Endothelial cell of umbilical vein (primary cell): ENCODE measurements at regions of chr4 and their contacts with region 1.

Region 1: GRCh38 chr4:103786014-103786413 is 66.2 kb upstream of the TACR3 start:
- DNase-seq: peak; percentile 40
- H3K4me3 ChIP-seq: no peak overlapping the region
- H3K27ac ChIP-seq: no peak overlapping the region
- H3K4me1 ChIP-seq: no peaks in the 10 kb centered on the region
- H3K27me3 ChIP-seq: no peaks in the 10 kb centered on the region
- CTCF ChIP-seq: peak; percentile 44 to 68
- POLR2A ChIP-seq: no peak

Region 2: GRCh38 chr4:103204111-103204510 is 581.9 kb before region 1 on chr4:
- CTCF ChIA-PET with region 1: interaction called, 36 read pairs
- POLR2A ChIA-PET with region 1: no interaction called
- dilution Hi-C with region 1: no loop called
- intact Hi-C with region 1: loop called (anchors 1 kb)
- DNase-seq: peak; percentile 21
- H3K4me3 ChIP-seq: no peak overlapping the region
- H3K27ac ChIP-seq: no peak overlapping the region
- H3K4me1 ChIP-seq: no peaks in the 10 kb centered on the region
- H3K27me3 ChIP-seq: peaks cover 0 to 2% of the 10 kb centered on the region in 2 experiments
- CTCF ChIP-seq: peak; percentile 5 to 8
- POLR2A ChIP-seq: no peak

Region 3: GRCh38 chr4:103478729-103479128 is 307.3 kb before region 1 on chr4:
- CTCF ChIA-PET with region 1: interaction called, 23 read pairs
- POLR2A ChIA-PET with region 1: no interaction called
- dilution Hi-C with region 1: no loop called
- intact Hi-C with region 1: loop called (anchors 1 kb)
- DNase-seq: peak; percentile 4
- H3K4me3 ChIP-seq: no peak overlapping the region
- H3K27ac ChIP-seq: no peak overlapping the region
- H3K4me1 ChIP-seq: no peaks in the 10 kb centered on the region
- H3K27me3 ChIP-seq: no peaks in the 10 kb centered on the region
- CTCF ChIP-seq: no peak
- POLR2A ChIP-seq: no peak

Region 4: GRCh38 chr4:103634236-103634635 is 151.8 kb before region 1 on chr4:
- CTCF ChIA-PET with region 1: interaction called, 14 read pairs
- POLR2A ChIA-PET with region 1: no interaction called
- dilution Hi-C with region 1: no loop called
- intact Hi-C with region 1: loop called (anchors 1 kb)
- DNase-seq: no peak
- H3K4me3 ChIP-seq: no peak overlapping the region
- H3K27ac ChIP-seq: no peak overlapping the region
- H3K4me1 ChIP-seq: no peaks in the 10 kb centered on the region
- H3K27me3 ChIP-seq: no peaks in the 10 kb centered on the region
- CTCF ChIP-seq: no peak
- POLR2A ChIP-seq: no peak

Region 5: GRCh38 chr4:103915224-103915869 is 129.3 kb after region 1 on chr4:
- CTCF ChIA-PET with region 1: no interaction called
- POLR2A ChIA-PET with region 1: no interaction called
- dilution Hi-C with region 1: no loop called
- intact Hi-C with region 1: loop called (anchors 10 kb)
- DNase-seq: peak; percentile 3
- H3K4me3 ChIP-seq: no peak overlapping the region
- H3K27ac ChIP-seq: no peak overlapping the region
- H3K4me1 ChIP-seq: no peaks in the 10 kb centered on the region
- H3K27me3 ChIP-seq: no peaks in the 10 kb centered on the region
- CTCF ChIP-seq: peak; percentile 34 to 56
- POLR2A ChIP-seq: no peak